Esophagus muscularis mucosa (tissue), 4 donors: ENCODE measurements at regions of chr15 and their contacts with region 1.

Region 1: GRCh38 chr15:64521726-64522164 is 61.4 kb downstream of the ZNF609 start:
- DNase-seq: no peak
- H3K4me3 ChIP-seq: no peak overlapping the region
- H3K27ac ChIP-seq: peak overlapping the region; percentile 19 to 37 (median 26)
- H3K4me1 ChIP-seq: peaks cover 16 to 50% (median 42%) of the 10 kb centered on the region in 4 donors
- H3K27me3 ChIP-seq: no peaks in the 10 kb centered on the region
- CTCF ChIP-seq: no peak
- EP300 ChIP-seq: no peak
- POLR2A ChIP-seq: no peak

Region 2: GRCh38 chr15:64460206-64460734 is 61.5 kb before region 1 on chr15 and contains the start of gene ZNF609:
- intact Hi-C with region 1: loop called (anchors 10 kb)
- DNase-seq: peak; percentile 97
- H3K4me3 ChIP-seq: peak within 1 kb of the TSS; percentile 84 to 99 (median 86)
- H3K27ac ChIP-seq: peak within 1 kb of the TSS; percentile 93 to 96 (median 96)
- H3K4me1 ChIP-seq: peaks cover 42 to 81% (median 76%) of the 10 kb centered on the region in 4 donors
- H3K27me3 ChIP-seq: no peaks in the 10 kb centered on the region
- CTCF ChIP-seq: peak in 1 of 3 experiments; percentile 15
- EP300 ChIP-seq: no peak
- POLR2A ChIP-seq: peak; percentile 68
- total RNA-seq, gene ZNF609: 38.3 to 53.7 (median 45.3) TPM